Mucosa of descending colon (tissue), 3 donors: ENCODE measurements at regions of chr12 and their contacts with region 1.

Region 1: DNA sequence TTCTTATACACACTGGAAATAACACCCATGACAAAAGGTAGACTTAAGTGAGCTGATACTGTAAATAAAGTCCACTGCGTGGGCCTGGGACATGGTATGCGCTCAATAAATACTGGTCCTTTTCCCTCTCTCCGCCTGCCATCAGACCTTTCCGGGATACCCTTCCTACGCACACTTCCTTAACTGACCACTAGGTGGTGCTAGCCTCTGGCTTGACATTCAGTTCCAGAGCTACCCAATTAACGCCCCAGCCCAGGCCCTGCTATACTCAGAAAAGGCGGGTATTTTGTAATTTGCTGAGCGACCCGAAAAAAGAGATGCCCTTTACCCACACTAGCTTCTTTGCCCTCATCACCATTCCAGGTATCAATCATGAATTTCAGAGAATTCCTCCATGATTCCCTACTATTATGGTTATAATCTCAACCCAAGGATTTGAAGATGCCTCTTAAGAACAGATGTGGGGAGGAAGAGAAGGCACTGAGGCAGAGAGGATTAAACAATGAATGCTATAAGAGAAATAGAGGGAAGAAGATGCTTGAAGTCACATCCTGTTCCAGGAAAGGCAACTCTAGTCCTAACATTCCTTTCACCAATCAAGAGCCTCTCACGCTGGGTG is 3.9 kb upstream of the LRP1 start:
- DNase-seq: peak in 1 of 3 donors; percentile 91
- ATAC-seq: peak; percentile 54
- H3K4me3 ChIP-seq: no peak overlapping the region
- H3K4me1 ChIP-seq: peaks cover 10% of the 10 kb centered on the region
- CTCF ChIP-seq: peak; percentile 93

Region 2: GRCh38 chr12:57175428-57176138 is 51.2 kb after region 1 on chr12:
- intact Hi-C with region 1: loop called (anchors 5 kb)
- DNase-seq: peak; percentile 76 to 86 (median 85)
- ATAC-seq: peak; percentile 76
- H3K4me3 ChIP-seq: no peak overlapping the region
- H3K4me1 ChIP-seq: no peaks in the 10 kb centered on the region
- CTCF ChIP-seq: peak; percentile 35

Region 3: GRCh38 chr12:57182921-57183790 is 58.8 kb after region 1 on chr12:
- intact Hi-C with region 1: loop called (anchors 5 kb)
- DNase-seq: peak; percentile 70 to 92 (median 89)
- ATAC-seq: peak; percentile 96
- H3K4me3 ChIP-seq: no peak overlapping the region
- H3K4me1 ChIP-seq: no peaks in the 10 kb centered on the region
- CTCF ChIP-seq: peak; percentile 82